ENCODE measurements at regions of chr3 and their contacts with region 1.

Region 1: GRCh38 chr3:125141596-125142419 is 70.7 kb downstream of the SLC12A8 start:
- DNase-seq: peak; percentile 42 to 83 (median 66)
- ATAC-seq: peak; percentile 90
- H3K4me3 ChIP-seq: peak overlapping the region; percentile 49
- H3K4me3 Mint-ChIP-seq: peak overlapping the region; percentile 70 to 85 (median 80)
- H3K27ac ChIP-seq: peak overlapping the region; percentile 51
- H3K27ac Mint-ChIP-seq: peak overlapping the region in 8 of 9 donors; percentile 71 to 94 (median 86)
- H3K4me1 ChIP-seq: peaks cover 12 to 23% of the 10 kb centered on the region in 2 donors
- H3K4me1 Mint-ChIP-seq: peaks cover 20 to 61% (median 33%) of the 10 kb centered on the region in 7 donors
- H3K27me3 ChIP-seq: no peaks in the 10 kb centered on the region
- H3K27me3 Mint-ChIP-seq: peaks cover 0 to 44% (median 0%) of the 10 kb centered on the region in 5 donors

Region 2: GRCh38 chr3:124834723-124835718 is 306.8 kb before region 1 on chr3:
- CTCF ChIA-PET with region 1: no interaction called
- POLR2A ChIA-PET with region 1: no interaction called
- intact Hi-C with region 1: loop called in 1 of 2 experiments (anchors 5 kb)
- DNase-seq: peak in 8 of 9 donors; percentile 18 to 58 (median 41)
- ATAC-seq: peak; percentile 86
- H3K4me3 ChIP-seq: peak overlapping the region; percentile 46
- H3K4me3 Mint-ChIP-seq: peak overlapping the region; percentile 82 to 93 (median 86)
- H3K27ac ChIP-seq: no peak overlapping the region
- H3K27ac Mint-ChIP-seq: peak overlapping the region; percentile 39 to 89 (median 77)
- H3K4me1 ChIP-seq: peaks cover 6 to 9% of the 10 kb centered on the region in 2 donors
- H3K4me1 Mint-ChIP-seq: peaks cover 13 to 21% (median 17%) of the 10 kb centered on the region in 7 donors
- H3K27me3 ChIP-seq: no peaks in the 10 kb centered on the region
- H3K27me3 Mint-ChIP-seq: peaks cover 2 to 49% (median 12%) of the 10 kb centered on the region in 5 donors

Region 3: GRCh38 chr3:124995460-124995994 is 146.3 kb before region 1 on chr3:
- CTCF ChIA-PET with region 1: interaction called, 4 read pairs
- POLR2A ChIA-PET with region 1: interaction called, 3 read pairs
- intact Hi-C with region 1: loop called (anchors 1 to 2 kb)
- DNase-seq: peak; percentile 28 to 69 (median 47)
- ATAC-seq: peak; percentile 93
- H3K4me3 ChIP-seq: no peak overlapping the region
- H3K4me3 Mint-ChIP-seq: peak overlapping the region in 2 of 10 donors; percentile 7 to 41
- H3K27ac ChIP-seq: no peak overlapping the region
- H3K27ac Mint-ChIP-seq: peak overlapping the region in 7 of 9 donors; percentile 21 to 80 (median 53)
- H3K4me1 ChIP-seq: no peaks in the 10 kb centered on the region
- H3K4me1 Mint-ChIP-seq: peaks cover 0 to 32% (median 19%) of the 10 kb centered on the region in 7 donors
- H3K27me3 ChIP-seq: no peaks in the 10 kb centered on the region
- H3K27me3 Mint-ChIP-seq: no peaks in the 10 kb centered on the region

Region 4: DNA sequence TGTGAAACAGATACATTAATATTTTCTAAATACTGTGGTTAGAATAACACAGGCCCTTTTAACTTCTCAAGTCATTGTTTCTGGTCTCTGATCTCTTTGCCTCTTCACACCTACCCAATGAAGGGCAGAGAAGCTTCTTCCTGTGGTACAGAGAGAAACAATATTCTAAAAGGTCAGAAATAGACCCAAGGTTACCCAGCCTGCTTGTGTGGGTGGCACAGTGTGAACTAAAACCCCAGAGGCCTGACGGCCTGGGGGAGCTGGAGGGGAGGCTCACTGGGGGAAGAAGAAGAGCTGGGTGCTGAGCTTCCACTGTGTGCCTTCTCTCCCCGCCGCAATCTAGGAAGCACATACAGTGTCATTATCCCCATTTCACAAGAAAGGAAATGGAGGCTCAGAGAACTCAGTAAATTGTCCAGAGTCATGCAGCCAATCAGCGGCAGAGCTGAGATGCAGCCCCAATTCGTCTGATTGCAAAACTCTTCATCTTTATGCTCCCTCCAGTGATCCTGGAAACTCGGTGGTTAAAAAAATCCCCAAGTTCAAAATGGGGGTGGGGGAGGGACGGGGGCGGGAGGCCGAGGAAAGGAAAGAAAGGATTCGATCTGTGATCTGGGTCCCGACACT is 21.9 kb before region 1 on chr3:
- CTCF ChIA-PET with region 1: no interaction called
- POLR2A ChIA-PET with region 1: no interaction called
- intact Hi-C with region 1: loop called (anchors 1 kb)
- DNase-seq: no peak
- ATAC-seq: peak; percentile 74
- H3K4me3 ChIP-seq: no peak overlapping the region
- H3K4me3 Mint-ChIP-seq: peak overlapping the region in 8 of 10 donors; percentile 30 to 65 (median 59)
- H3K27ac ChIP-seq: peak overlapping the region; percentile 40
- H3K27ac Mint-ChIP-seq: peak overlapping the region; percentile 65 to 91 (median 81)
- H3K4me1 ChIP-seq: peaks cover 23 to 45% of the 10 kb centered on the region in 2 donors
- H3K4me1 Mint-ChIP-seq: peaks cover 22 to 52% (median 33%) of the 10 kb centered on the region in 7 donors
- H3K27me3 ChIP-seq: no peaks in the 10 kb centered on the region
- H3K27me3 Mint-ChIP-seq: peaks cover 0 to 11% (median 0%) of the 10 kb centered on the region in 5 donors

Region 5: GRCh38 chr3:125318167-125318865 is 176.5 kb after region 1 on chr3:
- CTCF ChIA-PET with region 1: no interaction called
- POLR2A ChIA-PET with region 1: no interaction called
- intact Hi-C with region 1: no loop called
- DNase-seq: no peak
- ATAC-seq: no peak
- H3K4me3 ChIP-seq: no peak overlapping the region
- H3K4me3 Mint-ChIP-seq: no peak overlapping the region
- H3K27ac ChIP-seq: no peak overlapping the region
- H3K27ac Mint-ChIP-seq: peak overlapping the region in 6 of 9 donors; percentile 6 to 65 (median 50)
- H3K4me1 ChIP-seq: no peaks in the 10 kb centered on the region
- H3K4me1 Mint-ChIP-seq: peaks cover 3 to 48% (median 23%) of the 10 kb centered on the region in 7 donors
- H3K27me3 ChIP-seq: no peaks in the 10 kb centered on the region
- H3K27me3 Mint-ChIP-seq: no peaks in the 10 kb centered on the region

Region 6: GRCh38 chr3:125381743-125382142 is 239.9 kb after region 1 on chr3:
- CTCF ChIA-PET with region 1: no interaction called
- POLR2A ChIA-PET with region 1: no interaction called
- intact Hi-C with region 1: loop called in 1 of 2 experiments (anchors 5 kb)
- DNase-seq: peak in 8 of 9 donors; percentile 15 to 50 (median 31)
- ATAC-seq: peak; percentile 76
- H3K4me3 ChIP-seq: no peak overlapping the region
- H3K4me3 Mint-ChIP-seq: peak overlapping the region in 7 of 10 donors; percentile 27 to 65 (median 41)
- H3K27ac ChIP-seq: no peak overlapping the region
- H3K27ac Mint-ChIP-seq: peak overlapping the region in 6 of 9 donors; percentile 6 to 73 (median 50)
- H3K4me1 ChIP-seq: peaks cover 0 to 10% of the 10 kb centered on the region in 2 donors
- H3K4me1 Mint-ChIP-seq: peaks cover 10 to 24% (median 12%) of the 10 kb centered on the region in 7 donors
- H3K27me3 ChIP-seq: no peaks in the 10 kb centered on the region
- H3K27me3 Mint-ChIP-seq: peaks cover 0 to 15% (median 3%) of the 10 kb centered on the region in 5 donors